Heart right ventricle (tissue), 16 donors: ENCODE measurements at regions of chr10 and their contacts with region 1.

Region 1: DNA sequence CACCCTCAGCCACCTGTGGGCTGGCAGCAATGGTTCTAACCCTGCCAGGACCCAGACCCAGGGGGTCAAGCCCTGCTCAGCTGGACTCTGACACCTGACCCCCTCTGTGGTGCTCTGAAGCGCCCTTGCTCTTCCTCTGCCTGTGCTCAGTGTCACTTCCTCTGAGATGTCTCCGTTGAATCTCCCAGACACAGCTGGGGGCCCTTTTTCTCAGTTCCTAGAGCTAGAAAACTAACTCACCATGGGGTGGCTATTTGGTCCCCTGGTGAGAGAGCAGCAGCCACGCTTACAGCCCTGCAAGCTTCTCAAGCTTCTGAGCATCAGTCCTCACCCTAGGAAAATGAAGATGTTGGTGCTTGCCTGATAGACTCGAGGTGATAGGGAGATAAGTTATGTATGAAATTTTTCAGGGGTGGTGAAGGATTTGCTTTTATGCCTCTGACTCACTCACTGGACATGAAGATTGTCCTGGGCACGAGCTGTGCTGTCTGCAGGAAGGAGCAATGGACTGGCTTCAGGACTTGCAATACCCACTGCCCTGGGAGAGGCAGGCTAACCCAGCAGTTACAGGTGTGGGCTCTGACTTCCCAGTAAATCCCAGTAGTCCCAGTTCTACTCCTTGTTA is 29.6 kb downstream of the COL13A1 start:
- DNase-seq: no peak
- ATAC-seq: no peak
- H3K4me3 ChIP-seq: no peak overlapping the region
- H3K27ac ChIP-seq: no peak overlapping the region
- H3K4me1 ChIP-seq: peaks cover 0 to 31% (median 0%) of the 10 kb centered on the region in 9 donors
- H3K27me3 ChIP-seq: peaks cover 0 to 9% (median 0%) of the 10 kb centered on the region in 7 donors
- CTCF ChIP-seq: no peak

Region 2: GRCh38 chr10:71145352-71145945 is 1314.1 kb after region 1 on chr10:
- intact Hi-C with region 1: loop called in 1 of 10 experiments (anchors 5 kb)
- DNase-seq: no peak
- ATAC-seq: no peak
- H3K4me3 ChIP-seq: no peak overlapping the region
- H3K27ac ChIP-seq: no peak overlapping the region
- H3K4me1 ChIP-seq: peaks cover 0 to 16% (median 0%) of the 10 kb centered on the region in 9 donors
- H3K27me3 ChIP-seq: peaks cover 0 to 10% (median 0%) of the 10 kb centered on the region in 7 donors
- CTCF ChIP-seq: no peak